K562 (cell line): ENCODE measurements at regions of chr20 and their contacts with region 1.

Region 1: GRCh38 chr20:371755-372542 is 8.6 kb upstream of the TRIB3 start:
- DNase-seq: peak; percentile 77 to 97 (median 83)
- ATAC-seq: peak; percentile 80
- H3K4me3 ChIP-seq: no peak overlapping the region
- H3K27ac ChIP-seq: peak overlapping the region; percentile 99
- H3K4me1 ChIP-seq: peaks cover 56 to 80% of the 10 kb centered on the region in 2 experiments
- H3K27me3 ChIP-seq: no peaks in the 10 kb centered on the region
- CTCF ChIP-seq: peak in 2 of 3 experiments; percentile 21 to 23; a peak in 3 of 6 replicates
- EP300 ChIP-seq: peak; percentile 98
- POLR2A ChIP-seq: peak; percentile 64
- RAD21 ChIP-seq: peak; percentile 40 to 54; a peak in 3 of 4 replicates

Region 2: DNA sequence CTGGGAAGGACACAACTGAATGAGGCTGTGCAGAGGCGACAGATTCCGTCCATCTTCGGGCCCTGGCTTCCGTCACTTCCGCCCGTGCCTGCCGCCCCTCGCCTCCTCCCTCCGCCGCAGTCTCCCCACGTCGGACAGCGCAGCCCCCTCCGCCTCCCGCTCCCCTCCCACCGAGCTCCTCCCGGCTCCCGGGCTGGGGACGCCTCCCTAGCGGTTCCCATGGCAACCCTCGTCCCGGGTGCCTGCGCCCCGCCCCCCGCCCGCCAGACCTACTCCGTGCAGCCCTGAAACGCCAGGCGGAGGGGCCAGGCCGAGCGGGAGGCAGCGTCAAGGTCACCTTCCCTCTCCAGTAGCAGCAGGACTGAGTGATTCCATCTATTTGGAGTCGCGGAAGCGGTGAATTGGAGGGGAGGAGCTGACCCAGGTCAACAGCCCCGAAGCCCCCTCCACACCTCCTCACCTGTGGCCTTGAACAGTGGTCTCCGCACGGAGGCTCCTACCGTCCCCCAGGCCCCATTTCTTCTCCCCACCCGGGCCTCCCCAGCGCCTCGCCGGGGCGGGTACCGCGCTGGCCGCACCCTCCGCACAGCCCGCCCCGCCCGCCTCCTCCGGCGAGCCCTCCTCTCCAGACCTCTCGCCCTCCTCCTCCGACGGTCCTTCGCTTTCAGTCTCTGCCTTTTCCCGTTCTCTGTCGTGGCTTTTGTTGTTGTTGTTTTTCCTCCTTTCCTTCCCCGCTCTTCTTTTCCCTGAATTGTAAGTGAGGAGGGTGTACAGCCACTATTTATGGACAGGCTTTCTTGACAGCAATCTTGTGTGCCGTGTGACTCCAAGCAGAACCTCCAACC is 24.1 kb before region 1 on chr20:
- CTCF ChIA-PET with region 1: no interaction called
- POLR2A ChIA-PET with region 1: interaction called, 13 read pairs
- in situ Hi-C with region 1: no loop called
- intact Hi-C with region 1: no loop called
- DNase-seq: peak; percentile 96 to 98 (median 98)
- ATAC-seq: peak; percentile 90
- H3K4me3 ChIP-seq: peak overlapping the region; percentile 59
- H3K27ac ChIP-seq: peak overlapping the region; percentile 96
- H3K4me1 ChIP-seq: peaks cover 11 to 36% of the 10 kb centered on the region in 2 experiments
- H3K27me3 ChIP-seq: no peaks in the 10 kb centered on the region
- CTCF ChIP-seq: no peak
- EP300 ChIP-seq: no peak
- POLR2A ChIP-seq: peak; percentile 85
- RAD21 ChIP-seq: no peak

Region 3: DNA sequence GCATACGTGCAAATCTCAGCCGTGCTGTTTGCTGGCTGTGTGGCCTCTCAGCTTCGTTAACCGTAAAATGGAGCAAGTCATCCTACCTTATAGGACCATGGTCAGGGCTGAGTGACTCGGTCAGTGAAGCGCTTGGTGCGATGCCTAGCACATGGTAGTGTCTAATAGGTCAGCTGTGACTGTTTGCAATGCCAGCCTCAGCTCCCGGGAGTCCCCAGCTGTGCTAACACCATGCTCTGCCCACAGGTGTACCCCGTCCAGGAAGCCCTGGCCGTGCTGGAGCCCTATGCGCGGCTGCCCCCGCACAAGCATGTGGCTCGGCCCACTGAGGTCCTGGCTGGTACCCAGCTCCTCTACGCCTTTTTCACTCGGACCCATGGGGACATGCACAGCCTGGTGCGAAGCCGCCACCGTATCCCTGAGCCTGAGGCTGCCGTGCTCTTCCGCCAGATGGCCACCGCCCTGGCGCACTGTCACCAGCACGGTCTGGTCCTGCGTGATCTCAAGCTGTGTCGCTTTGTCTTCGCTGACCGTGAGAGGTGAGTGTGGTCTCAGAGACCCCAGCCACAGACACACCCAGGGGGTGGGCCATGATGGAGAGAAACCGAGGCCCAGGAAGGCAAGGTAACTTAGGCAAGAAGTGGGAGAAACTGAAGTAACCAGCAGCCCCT is 19.2 kb after region 1 on chr20:
- CTCF ChIA-PET with region 1: no interaction called
- POLR2A ChIA-PET with region 1: interaction called, 100 read pairs
- in situ Hi-C with region 1: no loop called
- intact Hi-C with region 1: no loop called
- DNase-seq: no peak
- ATAC-seq: peak; percentile 28
- H3K4me3 ChIP-seq: no peak overlapping the region
- H3K27ac ChIP-seq: no peak overlapping the region
- H3K4me1 ChIP-seq: peaks cover 0 to 8% of the 10 kb centered on the region in 2 experiments; a peak in 2 of 5 replicates
- H3K27me3 ChIP-seq: no peaks in the 10 kb centered on the region
- CTCF ChIP-seq: no peak
- EP300 ChIP-seq: no peak
- POLR2A ChIP-seq: no peak
- RAD21 ChIP-seq: no peak